ENCODE measurements at regions of chr22 and their contacts with region 1.

Region 1: DNA sequence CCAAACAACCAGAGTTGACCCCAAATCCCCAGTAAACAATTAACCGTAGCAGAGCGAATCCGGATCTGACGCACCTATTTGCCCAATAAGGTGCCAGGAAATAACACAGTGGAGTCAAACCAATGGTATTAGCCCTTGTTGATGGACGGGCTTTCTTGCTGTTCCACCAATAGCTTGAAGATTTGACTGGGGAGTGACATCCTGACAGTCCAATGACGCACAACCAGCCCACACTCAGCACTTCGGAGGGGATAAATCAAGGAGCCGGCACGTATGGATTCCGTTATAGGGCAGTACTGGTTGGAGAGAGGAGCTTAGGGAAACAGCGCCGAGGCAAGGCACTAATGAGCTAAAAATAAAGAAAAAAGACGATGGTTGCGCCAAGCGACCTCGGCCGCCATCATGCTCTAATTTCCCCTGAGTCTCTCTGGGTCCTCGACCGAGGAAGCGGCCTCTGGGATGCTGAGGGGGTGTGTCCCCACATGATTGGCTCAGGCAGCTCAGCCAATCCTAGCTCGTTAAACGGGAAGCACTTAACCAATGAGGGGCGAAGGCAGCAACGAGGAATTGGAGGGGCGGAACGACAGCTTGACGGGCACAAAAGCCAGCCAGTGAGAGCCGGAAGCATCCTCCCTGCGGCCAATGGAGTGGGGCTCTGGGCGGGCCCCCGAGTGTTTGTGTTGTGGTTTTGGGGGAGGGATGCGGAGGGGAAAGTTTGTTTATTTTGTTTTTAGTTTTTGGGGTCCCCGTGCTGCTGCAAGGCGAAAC is 49.5 kb downstream of the FAM83F start:
- DNase-seq: peak; percentile 98
- H3K4me3 ChIP-seq: peak overlapping the region; percentile 58
- H3K4me3 Mint-ChIP-seq: peak overlapping the region; percentile 97
- H3K27ac Mint-ChIP-seq: peak overlapping the region; percentile 98
- H3K4me1 ChIP-seq: no peaks in the 10 kb centered on the region; the same call in 1 of the 2 replicates
- H3K4me1 Mint-ChIP-seq: no peaks in the 10 kb centered on the region
- H3K27me3 ChIP-seq: no peaks in the 10 kb centered on the region
- H3K27me3 Mint-ChIP-seq: peaks cover 11% of the 10 kb centered on the region
- CTCF ChIP-seq: no peak

Region 2: GRCh38 chr22:39748877-39749276 is 295.4 kb before region 1 on chr22:
- CTCF ChIA-PET with region 1: no interaction called
- POLR2A ChIA-PET with region 1: no interaction called
- intact Hi-C with region 1: no loop called
- DNase-seq: no peak
- H3K4me3 ChIP-seq: no peak overlapping the region
- H3K4me3 Mint-ChIP-seq: no peak overlapping the region
- H3K27ac Mint-ChIP-seq: no peak overlapping the region
- H3K4me1 ChIP-seq: no peaks in the 10 kb centered on the region
- H3K4me1 Mint-ChIP-seq: no peaks in the 10 kb centered on the region
- H3K27me3 ChIP-seq: no peaks in the 10 kb centered on the region
- H3K27me3 Mint-ChIP-seq: peaks cover 19% of the 10 kb centered on the region
- CTCF ChIP-seq: no peak

Region 3: GRCh38 chr22:39845529-39845928 is 198.8 kb before region 1 on chr22:
- CTCF ChIA-PET with region 1: no interaction called
- POLR2A ChIA-PET with region 1: no interaction called
- intact Hi-C with region 1: no loop called
- DNase-seq: no peak
- H3K4me3 ChIP-seq: no peak overlapping the region
- H3K4me3 Mint-ChIP-seq: no peak overlapping the region
- H3K27ac Mint-ChIP-seq: no peak overlapping the region
- H3K4me1 ChIP-seq: no peaks in the 10 kb centered on the region
- H3K4me1 Mint-ChIP-seq: no peaks in the 10 kb centered on the region
- H3K27me3 ChIP-seq: no peaks in the 10 kb centered on the region
- H3K27me3 Mint-ChIP-seq: peaks cover 13% of the 10 kb centered on the region
- CTCF ChIP-seq: no peak

Region 4: GRCh38 chr22:39997939-39998338 is 46.3 kb before region 1 on chr22:
- CTCF ChIA-PET with region 1: interaction called, 3 read pairs
- POLR2A ChIA-PET with region 1: interaction called, 10 read pairs
- intact Hi-C with region 1: no loop called
- DNase-seq: peak; percentile 60 to 62
- H3K4me3 ChIP-seq: no peak overlapping the region
- H3K4me3 Mint-ChIP-seq: peak overlapping the region; percentile 64
- H3K27ac Mint-ChIP-seq: peak overlapping the region; percentile 93
- H3K4me1 ChIP-seq: peaks cover 75% of the 10 kb centered on the region
- H3K4me1 Mint-ChIP-seq: peaks cover 41% of the 10 kb centered on the region
- H3K27me3 ChIP-seq: no peaks in the 10 kb centered on the region
- H3K27me3 Mint-ChIP-seq: no peaks in the 10 kb centered on the region
- CTCF ChIP-seq: no peak

Region 5: DNA sequence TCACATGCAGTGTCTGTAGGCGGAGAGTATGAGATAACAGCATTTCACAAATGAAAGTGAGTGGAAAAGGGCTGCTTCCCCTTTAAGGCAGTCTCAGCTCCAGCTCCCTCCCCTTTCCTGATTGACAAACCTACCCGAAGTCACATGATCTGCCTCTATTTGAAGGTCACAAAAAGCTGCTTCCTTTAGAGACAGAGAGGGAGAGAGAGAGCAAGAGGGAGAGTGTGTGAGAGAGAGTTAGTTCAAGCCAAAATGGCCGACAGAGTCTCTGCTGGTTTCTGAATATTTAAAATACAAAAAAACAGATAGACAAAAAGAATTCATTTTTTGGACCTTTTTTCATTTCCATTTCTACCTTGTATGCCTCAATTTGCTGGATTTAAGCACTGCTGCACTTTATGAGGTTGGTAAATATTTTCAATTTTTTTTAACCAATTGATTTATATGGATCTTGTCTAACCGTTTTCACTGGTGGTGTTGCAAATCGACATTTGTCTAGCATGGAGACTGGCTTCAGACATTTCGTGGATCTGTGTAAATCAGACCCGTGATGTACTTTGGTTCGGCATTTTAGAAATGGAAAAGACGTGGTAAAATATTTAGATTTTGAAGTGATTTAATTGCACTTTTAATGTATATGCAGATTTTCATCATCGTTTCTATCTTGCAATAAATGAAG is 133.6 kb after region 1 on chr22 and contains the start of gene TNRC6B:
- CTCF ChIA-PET with region 1: no interaction called
- POLR2A ChIA-PET with region 1: interaction called, 16 read pairs
- intact Hi-C with region 1: loop called (anchors 1 kb)
- DNase-seq: peak; percentile 85 to 86
- H3K4me3 ChIP-seq: peak within 1 kb of the TSS; percentile 87
- H3K4me3 Mint-ChIP-seq: peak within 1 kb of the TSS; percentile 94
- H3K27ac Mint-ChIP-seq: peak within 1 kb of the TSS; percentile 94
- H3K4me1 ChIP-seq: peaks cover 41% of the 10 kb centered on the region
- H3K4me1 Mint-ChIP-seq: peaks cover 30% of the 10 kb centered on the region
- H3K27me3 ChIP-seq: no peaks in the 10 kb centered on the region
- H3K27me3 Mint-ChIP-seq: peaks cover 2% of the 10 kb centered on the region
- CTCF ChIP-seq: no peak
- total RNA-seq, gene TNRC6B: 22.1 and 23.5 TPM in 2 replicates

Region 6: DNA sequence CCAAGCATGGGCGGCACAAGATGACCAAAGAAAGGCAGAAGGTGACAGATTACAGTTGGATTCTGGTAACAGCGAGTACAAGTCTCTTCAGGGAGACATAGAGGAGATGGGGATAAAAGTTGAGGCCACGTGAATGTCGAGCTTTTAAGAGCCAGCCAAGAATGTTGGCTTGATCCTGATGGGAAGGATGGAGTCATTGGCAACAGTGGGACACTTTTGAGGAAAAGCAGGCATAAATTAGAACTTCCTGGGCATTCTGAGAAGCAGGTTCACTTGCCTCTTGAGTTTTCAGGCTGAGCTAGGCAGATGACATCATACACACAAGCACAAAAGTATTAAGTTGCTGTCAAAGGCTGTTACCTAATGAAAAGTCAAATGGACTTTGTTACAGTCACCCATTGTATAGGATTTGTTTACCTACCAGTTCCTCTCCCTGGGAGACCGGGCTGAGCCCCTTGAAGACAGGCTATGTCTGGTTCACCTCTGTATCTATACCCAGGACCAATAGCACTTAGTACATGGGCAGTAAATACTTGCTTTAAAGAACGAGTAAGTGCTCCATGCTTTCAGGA is 174.5 kb after region 1 on chr22:
- CTCF ChIA-PET with region 1: no interaction called
- POLR2A ChIA-PET with region 1: interaction called, 27 read pairs
- intact Hi-C with region 1: no loop called
- DNase-seq: peak in 1 of 2 experiments; percentile 23
- H3K4me3 ChIP-seq: no peak overlapping the region
- H3K4me3 Mint-ChIP-seq: no peak overlapping the region
- H3K27ac Mint-ChIP-seq: peak overlapping the region; percentile 23
- H3K4me1 ChIP-seq: peaks cover 17% of the 10 kb centered on the region; the same call in 1 of the 2 replicates
- H3K4me1 Mint-ChIP-seq: peaks cover 25% of the 10 kb centered on the region
- H3K27me3 ChIP-seq: no peaks in the 10 kb centered on the region
- H3K27me3 Mint-ChIP-seq: no peaks in the 10 kb centered on the region
- CTCF ChIP-seq: no peak

Region 7: GRCh38 chr22:40281717-40282116 is 237.4 kb after region 1 on chr22:
- CTCF ChIA-PET with region 1: no interaction called
- POLR2A ChIA-PET with region 1: no interaction called
- intact Hi-C with region 1: no loop called
- DNase-seq: no peak
- H3K4me3 ChIP-seq: no peak overlapping the region
- H3K4me3 Mint-ChIP-seq: no peak overlapping the region
- H3K27ac Mint-ChIP-seq: no peak overlapping the region
- H3K4me1 ChIP-seq: no peaks in the 10 kb centered on the region
- H3K4me1 Mint-ChIP-seq: no peaks in the 10 kb centered on the region
- H3K27me3 ChIP-seq: no peaks in the 10 kb centered on the region
- H3K27me3 Mint-ChIP-seq: no peaks in the 10 kb centered on the region
- CTCF ChIP-seq: no peak